Transverse colon (tissue), 4 donors: ENCODE measurements at regions of chr19 and their contacts with region 1.

Region 1: DNA sequence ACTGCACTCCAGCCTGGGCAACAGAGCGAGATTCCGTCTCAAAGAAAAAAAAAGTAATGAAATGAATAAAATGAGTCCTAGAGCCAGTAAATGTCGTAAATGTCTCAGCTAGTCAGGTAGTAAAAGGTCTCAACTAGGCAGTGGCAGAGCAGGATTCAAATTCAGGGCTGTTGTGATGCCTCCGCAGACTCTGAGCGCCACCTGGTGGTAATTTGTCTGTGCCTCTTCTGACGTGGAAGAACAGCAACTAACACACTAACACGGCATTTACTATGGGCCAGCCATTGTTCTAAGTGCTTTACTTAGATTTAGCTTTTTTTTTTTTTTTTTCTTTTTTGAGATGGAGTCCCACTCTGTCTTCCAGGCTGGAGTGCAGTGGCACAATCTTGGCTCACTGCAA is 30.2 kb downstream of the CYP2F1 start:
- DNase-seq: peak; percentile 92
- H3K4me3 ChIP-seq: no peak overlapping the region
- H3K27ac ChIP-seq: no peak overlapping the region
- H3K4me1 ChIP-seq: no peaks in the 10 kb centered on the region
- H3K27me3 ChIP-seq: no peaks in the 10 kb centered on the region
- CTCF ChIP-seq: peak; percentile 84 to 95 (median 86)
- EP300 ChIP-seq: no peak
- POLR2A ChIP-seq: no peak

Region 2: DNA sequence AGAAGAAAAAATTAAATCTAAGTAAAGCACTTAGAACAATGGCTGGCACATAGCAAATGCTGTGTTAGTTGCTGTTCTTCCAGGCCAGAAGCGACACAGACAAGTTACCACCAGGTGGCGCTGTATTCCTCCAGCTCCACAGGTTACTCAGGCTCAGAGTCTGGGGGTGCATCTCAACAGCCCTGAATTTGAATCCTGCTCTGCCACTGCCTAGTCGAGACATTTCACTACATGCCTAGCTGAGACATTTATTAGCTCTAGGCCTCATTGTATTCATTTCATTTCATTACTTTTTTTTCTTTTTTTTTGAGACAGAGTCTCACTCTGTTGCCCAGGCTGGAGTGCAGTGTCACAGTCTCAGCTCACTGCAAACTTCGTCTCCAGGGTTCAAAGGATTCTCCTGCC is 169.8 kb before region 1 on chr19:
- in situ Hi-C with region 1: loop called in 2 of 4 experiments (anchors 10 kb)
- intact Hi-C with region 1: no loop called
- DNase-seq: peak; percentile 81
- H3K4me3 ChIP-seq: no peak overlapping the region
- H3K27ac ChIP-seq: no peak overlapping the region
- H3K4me1 ChIP-seq: peaks cover 0 to 3% (median 0%) of the 10 kb centered on the region in 4 donors
- H3K27me3 ChIP-seq: no peaks in the 10 kb centered on the region
- CTCF ChIP-seq: peak; percentile 85 to 93 (median 89)
- EP300 ChIP-seq: no peak
- POLR2A ChIP-seq: no peak

Region 3: DNA sequence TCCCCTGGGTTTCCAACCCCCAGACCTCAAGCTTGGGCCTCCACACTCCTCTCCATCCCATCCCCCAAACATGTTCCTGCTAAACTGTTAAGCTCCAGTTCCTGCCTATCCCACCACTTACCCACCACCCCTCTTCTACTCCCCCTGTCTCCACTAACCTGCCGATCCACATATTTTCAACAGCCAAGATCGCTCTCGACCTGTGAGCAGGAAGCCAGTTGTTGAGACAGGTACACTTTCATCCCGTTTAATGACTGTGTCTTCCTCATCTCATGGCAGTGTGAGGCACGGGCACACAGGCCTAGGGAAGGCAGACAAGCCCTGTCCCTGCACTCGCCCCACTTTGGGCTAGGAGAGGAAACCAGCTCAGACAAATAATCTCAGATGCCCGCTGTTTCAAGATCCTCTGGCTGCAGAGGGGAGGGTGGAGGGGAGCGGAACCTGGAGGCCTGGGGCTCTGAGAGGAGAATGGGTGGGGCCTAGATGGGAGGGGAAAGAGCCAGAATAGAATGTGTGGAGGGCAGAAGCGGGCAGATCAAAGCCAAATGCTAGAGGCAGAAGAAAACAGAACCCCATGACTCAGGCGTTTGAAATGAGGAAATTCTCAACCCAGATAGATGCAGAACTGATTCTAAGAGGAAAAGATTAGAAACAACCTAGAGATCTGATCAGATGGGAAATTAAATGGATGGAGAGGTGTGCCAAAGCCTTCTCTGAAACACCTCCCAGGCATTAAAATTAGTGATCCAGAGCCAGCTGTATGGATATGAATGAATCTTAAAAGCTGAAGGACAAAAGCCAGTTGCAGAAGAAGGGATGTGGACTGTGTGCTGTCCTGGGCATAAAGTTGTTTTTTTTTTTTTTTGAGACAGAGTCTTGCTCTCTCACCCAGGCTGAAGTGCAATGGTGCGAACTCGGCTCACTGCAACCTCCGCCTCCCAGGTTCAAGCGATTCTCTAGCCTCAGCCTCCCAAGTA is 31.7 kb after region 1 on chr19:
- in situ Hi-C with region 1: no loop called
- intact Hi-C with region 1: no loop called
- DNase-seq: peak; percentile 57
- H3K4me3 ChIP-seq: no peak overlapping the region
- H3K27ac ChIP-seq: peak overlapping the region; percentile 36 to 68 (median 66)
- H3K4me1 ChIP-seq: peaks cover 0 to 44% (median 21%) of the 10 kb centered on the region in 4 donors
- H3K27me3 ChIP-seq: no peaks in the 10 kb centered on the region
- CTCF ChIP-seq: no peak
- EP300 ChIP-seq: no peak
- POLR2A ChIP-seq: no peak